OCI-LY7 (cell line): ENCODE measurements at regions of chr3 and their contacts with region 1.

Region 1: GRCh38 chr3:78659386-78659987 is 1108.3 kb downstream of the ROBO1 start:
- DNase-seq: peak; percentile 54
- H3K4me3 ChIP-seq: no peak overlapping the region
- H3K27ac ChIP-seq: no peak overlapping the region
- H3K4me1 ChIP-seq: no peaks in the 10 kb centered on the region
- CTCF ChIP-seq: peak; percentile 81

Region 2: DNA sequence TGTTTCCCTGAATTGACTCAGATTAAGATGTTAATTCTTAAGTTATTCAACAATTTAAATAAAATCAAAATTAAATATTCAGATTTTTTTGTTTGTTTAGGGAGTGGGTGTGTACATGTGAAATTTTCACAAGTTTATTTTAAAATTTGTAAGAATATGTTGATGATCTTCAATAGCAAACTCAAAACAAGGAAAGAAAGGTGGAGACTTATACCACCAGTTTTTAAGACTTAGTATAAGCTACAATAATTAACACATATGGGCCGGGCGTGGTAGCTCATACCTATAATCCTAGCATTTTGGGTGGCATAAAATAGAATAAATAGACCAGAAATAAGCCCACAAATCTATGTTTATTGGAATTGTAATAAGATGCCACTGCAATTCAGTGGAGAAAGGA is 23.8 kb after region 1 on chr3:
- CTCF ChIA-PET with region 1: no interaction called
- POLR2A ChIA-PET with region 1: no interaction called
- intact Hi-C with region 1: no loop called
- DNase-seq: no peak
- H3K4me3 ChIP-seq: no peak overlapping the region
- H3K27ac ChIP-seq: no peak overlapping the region
- H3K4me1 ChIP-seq: no peaks in the 10 kb centered on the region
- CTCF ChIP-seq: no peak

Region 3: DNA sequence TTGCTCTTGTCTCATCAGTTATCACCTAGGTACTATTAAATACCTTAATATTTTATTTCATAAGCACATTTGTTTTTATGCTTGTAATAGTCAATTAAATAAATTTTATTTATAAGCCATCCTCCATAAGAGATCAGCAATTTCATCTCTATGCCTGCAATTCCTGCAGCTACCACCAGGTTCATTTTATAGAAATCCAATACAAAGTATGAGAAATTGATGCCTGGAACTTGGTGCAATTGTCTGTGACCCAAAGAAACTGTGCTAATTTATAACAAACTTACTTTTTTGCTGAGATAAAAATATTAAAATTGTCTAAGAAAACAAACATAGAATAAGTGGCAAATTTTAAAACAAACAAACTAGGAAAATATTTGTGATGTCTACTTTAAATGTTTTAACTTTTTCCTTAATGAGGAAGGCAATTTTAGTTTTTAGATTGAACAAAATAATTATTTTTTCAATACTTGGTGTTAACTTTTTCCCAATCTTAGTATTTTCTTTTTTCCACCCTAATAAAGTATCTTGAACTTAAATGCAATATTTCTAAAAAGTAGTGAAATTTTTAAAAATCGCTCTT is 81.7 kb after region 1 on chr3:
- CTCF ChIA-PET with region 1: no interaction called
- POLR2A ChIA-PET with region 1: no interaction called
- intact Hi-C with region 1: no loop called
- DNase-seq: peak; percentile 8
- H3K4me3 ChIP-seq: no peak overlapping the region
- H3K27ac ChIP-seq: no peak overlapping the region
- H3K4me1 ChIP-seq: no peaks in the 10 kb centered on the region
- CTCF ChIP-seq: peak; percentile 76

Region 4: DNA sequence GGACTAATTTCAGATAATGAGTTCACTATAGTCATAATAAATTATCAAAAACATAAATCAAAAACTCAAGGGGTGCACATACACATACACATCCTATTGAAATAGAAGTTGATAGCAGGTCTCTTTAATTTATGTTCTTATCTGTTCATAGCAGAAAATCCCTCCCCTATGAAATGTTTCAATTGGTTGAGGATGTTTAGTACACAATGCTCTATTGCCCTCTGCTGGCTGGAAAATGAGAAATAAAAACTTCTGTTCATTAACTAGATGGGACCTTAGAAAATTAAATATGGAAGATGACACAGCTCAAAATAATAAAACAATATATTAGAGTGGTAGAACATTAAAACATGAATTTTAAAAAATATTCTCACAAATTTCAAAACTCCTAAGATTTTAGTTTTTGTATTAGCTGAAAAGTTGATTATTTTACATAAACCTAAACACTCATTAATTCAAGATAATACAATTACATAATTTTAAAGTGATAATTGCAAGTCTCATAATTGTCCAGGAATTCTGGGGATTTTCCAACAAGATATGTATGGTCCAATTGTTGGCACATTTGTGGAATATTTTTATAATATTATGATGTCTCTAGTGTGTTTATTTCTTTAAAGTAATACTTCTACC is 373.3 kb after region 1 on chr3:
- CTCF ChIA-PET with region 1: no interaction called
- POLR2A ChIA-PET with region 1: no interaction called
- intact Hi-C with region 1: loop called (anchors 1 kb)
- DNase-seq: peak; percentile 41
- H3K4me3 ChIP-seq: no peak overlapping the region
- H3K27ac ChIP-seq: no peak overlapping the region
- H3K4me1 ChIP-seq: no peaks in the 10 kb centered on the region
- CTCF ChIP-seq: peak; percentile 84

Region 5: GRCh38 chr3:79361748-79362378 is 702.4 kb after region 1 on chr3:
- CTCF ChIA-PET with region 1: no interaction called
- POLR2A ChIA-PET with region 1: no interaction called
- intact Hi-C with region 1: loop called (anchors 5 kb)
- DNase-seq: peak; percentile 23
- H3K4me3 ChIP-seq: no peak overlapping the region
- H3K27ac ChIP-seq: no peak overlapping the region
- H3K4me1 ChIP-seq: no peaks in the 10 kb centered on the region
- CTCF ChIP-seq: peak; percentile 87